ENCODE measurements at regions of chr17 and their contacts with region 1.

Region 1: GRCh38 chr17:15944759-15945529 is at the start of gene ADORA2B:
- DNase-seq: peak; percentile 66
- ATAC-seq: peak; percentile 86
- H3K4me3 Mint-ChIP-seq: peak within 1 kb of the TSS; percentile 77
- H3K27ac Mint-ChIP-seq: peak within 1 kb of the TSS; percentile 79
- H3K4me1 Mint-ChIP-seq: peaks cover 19% of the 10 kb centered on the region
- H3K27me3 Mint-ChIP-seq: peaks cover 26% of the 10 kb centered on the region
- total RNA-seq, gene ADORA2B: 1.7 to 2.9 TPM

Region 2: GRCh38 chr17:15957608-15958307 is 12.8 kb after region 1 on chr17:
- CTCF ChIA-PET with region 1: interaction called, 12 read pairs
- POLR2A ChIA-PET with region 1: interaction called, 6 read pairs
- DNase-seq: no peak
- ATAC-seq: no peak
- H3K4me3 Mint-ChIP-seq: no peak overlapping the region
- H3K27ac Mint-ChIP-seq: no peak overlapping the region
- H3K4me1 Mint-ChIP-seq: peaks cover 42% of the 10 kb centered on the region
- H3K27me3 Mint-ChIP-seq: peaks cover 10% of the 10 kb centered on the region

Region 3: DNA sequence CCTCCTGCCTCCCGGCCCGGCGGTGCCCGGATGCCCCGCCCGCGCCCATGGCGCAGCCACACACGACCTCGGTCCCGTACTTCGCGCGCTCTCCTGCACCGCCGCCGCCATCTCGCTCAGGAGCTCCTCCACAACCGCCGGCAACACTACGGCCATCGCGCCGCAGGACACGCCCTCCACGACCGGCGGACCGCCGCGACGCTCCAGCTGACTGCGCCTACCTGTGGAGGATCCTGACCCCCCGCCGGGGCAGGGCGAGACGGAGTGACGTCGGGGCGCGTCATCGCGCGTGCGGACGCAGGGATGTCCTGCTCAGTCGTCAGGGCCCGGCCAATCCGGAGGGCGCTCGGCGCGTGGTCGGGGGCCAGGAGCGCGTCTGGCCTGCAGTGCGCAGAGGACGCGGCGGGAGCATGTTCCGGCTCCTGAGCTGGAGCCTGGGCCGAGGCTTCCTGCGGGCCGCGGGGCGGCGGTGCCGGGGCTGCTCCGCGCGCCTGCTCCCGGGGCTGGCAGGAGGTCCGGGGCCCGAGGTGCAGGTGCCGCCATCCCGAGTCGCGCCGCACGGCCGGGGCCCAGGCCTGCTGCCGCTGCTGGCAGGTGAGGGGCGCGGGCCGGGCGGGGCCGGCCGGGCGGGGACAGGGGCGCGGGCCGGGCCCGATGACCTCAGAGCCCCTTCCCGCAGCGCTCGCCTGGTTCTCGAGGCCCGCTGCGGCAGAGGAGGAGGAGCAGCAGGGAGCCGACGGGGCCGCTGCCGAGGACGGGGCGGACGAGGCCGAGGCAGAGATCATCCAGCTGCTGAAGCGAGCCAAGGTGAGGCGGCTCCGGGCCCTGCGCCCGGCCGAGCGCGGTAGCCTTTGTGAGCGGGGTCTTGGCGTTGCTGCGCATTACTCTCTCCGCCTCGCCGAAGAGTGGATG is 54.8 kb after region 1 on chr17 and contains the starts of genes TTC19 and ZSWIM7:
- CTCF ChIA-PET with region 1: interaction called, 28 read pairs
- POLR2A ChIA-PET with region 1: interaction called, 11 read pairs
- DNase-seq: peak; percentile 96
- ATAC-seq: peak; percentile 91
- H3K4me3 Mint-ChIP-seq: peak within 1 kb of the TSS; percentile 93
- H3K27ac Mint-ChIP-seq: peak within 1 kb of the TSS; percentile 99
- H3K4me1 Mint-ChIP-seq: peaks cover 32% of the 10 kb centered on the region
- H3K27me3 Mint-ChIP-seq: no peaks in the 10 kb centered on the region
- total RNA-seq, gene TTC19: 31.5 to 38.1 TPM
- total RNA-seq, gene ZSWIM7: 19.3 to 20.0 TPM

Region 4: DNA sequence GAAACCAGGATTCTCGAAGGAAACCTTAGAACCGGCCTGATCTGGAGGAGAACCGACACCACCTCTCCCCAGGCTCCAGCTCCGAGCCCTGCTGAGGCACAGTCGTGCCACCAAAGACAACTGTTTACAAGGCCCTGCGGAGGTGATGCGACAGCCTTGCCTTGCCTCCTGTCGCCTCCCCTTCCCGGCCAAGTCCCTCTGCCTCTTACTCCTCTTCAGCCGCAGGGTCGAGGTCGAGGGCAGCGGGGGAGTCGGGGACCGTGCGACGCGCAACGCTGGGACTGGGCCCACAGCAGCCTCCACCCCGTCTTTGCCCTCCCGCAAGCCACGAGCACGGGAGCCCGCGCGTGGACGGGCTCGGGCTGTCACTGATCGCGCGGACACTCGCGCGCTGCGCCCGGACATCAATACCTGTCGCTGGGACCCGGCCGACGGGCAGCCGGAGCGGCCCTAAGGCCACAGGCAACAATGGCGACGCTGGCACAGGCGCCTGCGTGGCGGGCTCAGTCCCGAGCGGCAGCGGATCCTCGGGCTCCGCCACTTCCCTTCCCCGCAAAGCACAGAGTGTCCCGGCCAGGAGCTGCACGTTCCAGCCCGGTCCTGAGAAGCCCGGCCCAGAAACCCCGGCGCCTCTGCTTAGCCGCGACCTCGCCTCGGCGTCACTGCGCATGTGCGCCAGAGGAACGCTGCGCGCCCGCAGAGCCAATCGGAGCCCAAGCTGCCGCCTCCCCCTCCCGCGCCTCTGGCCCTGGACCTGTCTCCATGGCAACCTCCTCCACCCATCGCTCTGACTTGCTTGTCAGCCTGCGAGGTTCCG is 623.8 kb after region 1 on chr17 and contains the start of gene ZNF287:
- CTCF ChIA-PET with region 1: no interaction called
- POLR2A ChIA-PET with region 1: no interaction called
- DNase-seq: peak; percentile 93
- ATAC-seq: peak; percentile 99
- H3K4me3 Mint-ChIP-seq: peak within 1 kb of the TSS; percentile 83
- H3K27ac Mint-ChIP-seq: peak within 1 kb of the TSS; percentile 71
- H3K4me1 Mint-ChIP-seq: peaks cover 17% of the 10 kb centered on the region
- H3K27me3 Mint-ChIP-seq: peaks cover 11% of the 10 kb centered on the region
- total RNA-seq, gene ZNF287: 5.7 to 5.9 TPM

Measured in activated CD8-positive, alpha-beta T cell treated with anti-CD3 and anti-CD28 coated beads, Interleukin-2, amount 10 ng/mL, durations not matched to agents 7 days and 5 days (primary cell).